ENCODE measurements at regions of chr1 and their contacts with region 1.

Region 1: DNA sequence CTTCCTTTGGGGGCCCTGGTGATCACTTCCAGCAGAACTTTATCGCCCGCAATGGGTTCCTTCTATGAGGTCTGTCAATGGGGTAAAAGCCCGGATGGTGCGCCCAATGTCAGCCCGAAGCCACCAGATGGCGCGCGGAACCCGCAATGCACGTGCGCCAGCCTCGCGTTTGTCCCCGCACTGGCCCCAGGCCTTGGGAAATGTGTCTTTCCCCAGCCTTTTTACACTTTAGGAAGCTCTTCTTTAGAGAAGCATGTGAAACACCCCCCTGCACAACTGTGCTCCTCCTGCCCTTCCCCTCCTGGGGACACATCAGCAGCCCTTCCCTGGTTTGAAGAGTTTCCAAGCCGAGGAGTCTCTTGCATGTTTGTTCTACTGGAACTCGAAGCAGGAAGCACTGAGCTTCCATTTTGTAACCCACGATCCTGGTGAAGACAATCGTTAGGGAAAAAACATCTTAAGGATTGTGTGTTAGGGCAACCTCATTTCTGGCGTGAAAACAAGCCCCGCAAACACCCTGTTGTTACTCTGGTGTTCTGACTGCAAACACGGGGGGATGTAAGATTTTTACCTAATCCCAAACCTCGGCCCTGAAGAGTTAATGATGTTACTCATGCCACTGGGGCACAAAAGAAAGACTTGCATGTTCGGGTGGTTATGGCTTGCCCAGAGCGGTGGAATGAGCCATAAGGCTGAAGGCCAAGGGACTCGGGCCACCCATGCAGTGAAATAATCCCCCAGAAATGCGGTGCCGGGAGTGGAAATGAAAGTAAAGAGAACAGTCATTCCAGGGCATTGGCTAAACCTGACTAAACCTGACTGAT is 20.4 kb upstream of the TARBP1 start:
- DNase-seq: peak; percentile 92 to 93
- ATAC-seq: peak; percentile 95 to 98 (median 97)
- H3K4me3 ChIP-seq: peak overlapping the region in 6 of 10 donors; percentile 3 to 21 (median 12)
- H3K27ac ChIP-seq: peak overlapping the region; percentile 61 to 88 (median 84)
- H3K4me1 ChIP-seq: peaks cover 4 to 48% (median 30%) of the 10 kb centered on the region in 9 donors
- H3K27me3 ChIP-seq: no peaks in the 10 kb centered on the region
- CTCF ChIP-seq: peak; percentile 92 to 99 (median 96)

Region 2: DNA sequence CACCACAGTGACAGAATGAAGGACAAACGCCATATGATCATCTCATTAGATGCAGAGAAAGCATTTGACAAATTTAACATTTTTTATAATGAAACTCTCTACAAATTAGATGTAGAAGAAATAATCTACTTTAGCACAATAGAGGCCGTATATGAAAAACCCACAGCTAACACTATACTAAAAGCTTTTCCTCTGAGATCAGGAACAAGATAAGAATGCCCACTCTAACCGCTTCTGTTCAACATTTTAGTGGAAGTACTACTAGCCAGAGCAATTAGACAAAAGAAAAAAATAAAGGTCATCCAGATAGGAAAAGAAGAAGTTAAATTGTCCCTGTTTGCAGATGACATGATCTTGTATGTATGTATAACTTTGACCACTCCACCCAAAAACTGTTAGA is 485.1 kb before region 1 on chr1:
- intact Hi-C with region 1: no loop called
- DNase-seq: no peak
- ATAC-seq: no peak
- H3K4me3 ChIP-seq: no peak overlapping the region
- H3K27ac ChIP-seq: no peak overlapping the region
- H3K4me1 ChIP-seq: no peaks in the 10 kb centered on the region
- H3K27me3 ChIP-seq: peaks cover 0 to 7% (median 0%) of the 10 kb centered on the region in 7 donors
- CTCF ChIP-seq: no peak

Region 3: DNA sequence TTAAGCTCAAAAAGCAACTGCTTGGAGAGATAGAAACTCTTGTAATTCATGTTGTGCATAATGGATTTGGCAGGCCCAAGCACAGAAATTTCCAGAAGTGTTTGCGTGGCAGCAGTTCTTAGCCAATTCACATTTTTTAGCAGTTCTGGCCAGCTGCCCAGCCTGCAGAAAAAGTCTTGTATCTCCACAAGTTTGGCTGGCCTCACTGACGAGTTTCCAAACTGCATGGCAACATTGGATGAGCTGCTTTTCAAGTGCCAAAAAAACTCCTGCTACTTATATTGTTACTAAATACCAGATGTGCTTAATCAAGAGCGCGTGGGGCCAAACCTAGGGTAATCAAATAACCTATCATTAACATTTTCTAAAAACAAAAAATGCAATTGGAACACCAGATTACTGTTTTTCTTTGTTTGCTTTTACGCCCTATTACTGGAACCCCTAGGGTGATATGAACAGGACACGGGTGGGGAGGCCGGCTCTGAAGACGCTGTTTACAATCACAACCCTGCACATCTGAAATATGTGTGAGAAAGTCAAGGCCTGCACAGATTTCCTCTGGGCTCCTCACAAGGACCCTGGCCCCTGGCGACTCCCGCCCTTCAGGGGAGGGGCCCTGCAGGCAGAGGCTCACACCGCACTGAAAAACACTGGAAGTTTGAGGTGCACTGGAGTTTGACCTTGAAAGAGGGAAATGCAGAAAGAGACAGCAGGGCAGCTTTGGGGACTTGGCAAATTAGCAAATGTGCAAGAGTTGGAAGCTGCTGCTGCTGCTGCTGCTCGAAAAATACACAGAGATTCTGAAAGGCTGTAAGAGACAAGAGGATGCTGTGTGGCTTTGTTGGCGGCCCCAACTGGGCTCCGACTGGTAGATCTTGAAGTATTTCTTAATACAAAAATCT is 34.9 kb after region 1 on chr1:
- intact Hi-C with region 1: loop called in 2 of 10 experiments (anchors 5 kb)
- DNase-seq: peak; percentile 89 to 95
- ATAC-seq: peak in 7 of 8 donors; percentile 6 to 60 (median 30)
- H3K4me3 ChIP-seq: peak overlapping the region in 1 of 10 donors; percentile 1
- H3K27ac ChIP-seq: peak overlapping the region; percentile 94 to 99 (median 98)
- H3K4me1 ChIP-seq: peaks cover 53 to 100% (median 97%) of the 10 kb centered on the region in 9 donors
- H3K27me3 ChIP-seq: no peaks in the 10 kb centered on the region
- CTCF ChIP-seq: no peak

Region 4: GRCh38 chr1:234599617-234600417 is 100.5 kb after region 1 on chr1:
- intact Hi-C with region 1: loop called in 7 of 10 experiments (anchors 2 to 10 kb)
- DNase-seq: peak; percentile 89 to 91
- ATAC-seq: peak; percentile 82 to 97 (median 91)
- H3K4me3 ChIP-seq: peak overlapping the region in 9 of 10 donors; percentile 29 to 95 (median 51)
- H3K27ac ChIP-seq: peak overlapping the region; percentile 91 to 100 (median 99)
- H3K4me1 ChIP-seq: peaks cover 3 to 70% (median 54%) of the 10 kb centered on the region in 9 donors
- H3K27me3 ChIP-seq: no peaks in the 10 kb centered on the region
- CTCF ChIP-seq: peak in 3 of 9 donors; percentile 22 to 36 (median 25)

Region 5: DNA sequence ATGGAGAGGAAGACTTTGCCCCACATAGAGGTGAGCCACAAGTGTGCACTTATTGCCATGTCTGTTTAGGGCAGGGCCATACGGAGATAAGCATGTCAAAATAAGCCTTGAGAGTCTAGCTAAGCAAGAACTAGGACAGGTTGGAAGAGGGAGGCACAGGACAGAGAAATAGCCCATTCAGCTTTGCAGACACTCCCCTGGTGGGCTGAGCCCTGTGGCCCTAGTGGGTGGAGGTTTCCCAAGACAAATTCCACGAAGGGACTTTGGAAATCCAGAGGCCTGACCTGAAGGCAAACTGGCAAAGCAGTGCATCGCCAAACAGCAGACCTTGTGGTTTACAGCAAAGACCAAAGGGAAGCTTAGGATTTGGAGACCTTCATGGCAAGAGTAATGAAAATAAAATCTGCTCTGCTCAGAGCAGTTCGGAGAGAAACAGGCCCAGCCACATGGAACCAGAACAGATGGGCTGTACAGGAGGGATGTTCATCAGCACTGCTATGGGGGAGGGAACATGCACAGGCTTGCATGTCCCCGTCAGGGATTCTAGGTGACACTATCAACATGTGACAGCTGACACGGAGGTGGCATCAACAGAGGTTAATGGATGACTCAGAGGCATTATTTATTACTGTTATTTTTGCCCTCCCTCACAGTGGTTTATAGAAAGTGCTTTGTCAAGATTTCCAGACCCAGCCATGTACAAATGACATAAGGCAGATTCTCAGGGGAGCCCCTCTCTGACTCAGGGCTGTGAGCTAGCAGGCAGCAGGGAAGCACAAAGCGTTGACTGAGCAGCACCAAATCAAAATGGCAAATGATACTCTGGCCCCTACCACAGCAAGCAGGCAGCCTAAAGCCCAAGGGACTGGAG is 200.7 kb after region 1 on chr1:
- intact Hi-C with region 1: loop called in 1 of 10 experiments (anchors 10 kb)
- DNase-seq: peak in 1 of 2 donors; percentile 62
- ATAC-seq: peak in 7 of 8 donors; percentile 13 to 69 (median 48)
- H3K4me3 ChIP-seq: no peak overlapping the region
- H3K27ac ChIP-seq: peak overlapping the region in 9 of 10 donors; percentile 21 to 67 (median 57)
- H3K4me1 ChIP-seq: peaks cover 0 to 40% (median 14%) of the 10 kb centered on the region in 9 donors
- H3K27me3 ChIP-seq: no peaks in the 10 kb centered on the region
- CTCF ChIP-seq: no peak

Region 6: GRCh38 chr1:234862944-234863515 is 363.7 kb after region 1 on chr1:
- intact Hi-C with region 1: loop called in 1 of 10 experiments (anchors 10 kb)
- DNase-seq: peak; percentile 76 to 86
- ATAC-seq: peak; percentile 62 to 85 (median 76)
- H3K4me3 ChIP-seq: peak overlapping the region in 4 of 10 donors; percentile 4 to 17 (median 6)
- H3K27ac ChIP-seq: peak overlapping the region; percentile 60 to 93 (median 82)
- H3K4me1 ChIP-seq: peaks cover 6 to 51% (median 42%) of the 10 kb centered on the region in 9 donors
- H3K27me3 ChIP-seq: no peaks in the 10 kb centered on the region
- CTCF ChIP-seq: no peak

Region 7: DNA sequence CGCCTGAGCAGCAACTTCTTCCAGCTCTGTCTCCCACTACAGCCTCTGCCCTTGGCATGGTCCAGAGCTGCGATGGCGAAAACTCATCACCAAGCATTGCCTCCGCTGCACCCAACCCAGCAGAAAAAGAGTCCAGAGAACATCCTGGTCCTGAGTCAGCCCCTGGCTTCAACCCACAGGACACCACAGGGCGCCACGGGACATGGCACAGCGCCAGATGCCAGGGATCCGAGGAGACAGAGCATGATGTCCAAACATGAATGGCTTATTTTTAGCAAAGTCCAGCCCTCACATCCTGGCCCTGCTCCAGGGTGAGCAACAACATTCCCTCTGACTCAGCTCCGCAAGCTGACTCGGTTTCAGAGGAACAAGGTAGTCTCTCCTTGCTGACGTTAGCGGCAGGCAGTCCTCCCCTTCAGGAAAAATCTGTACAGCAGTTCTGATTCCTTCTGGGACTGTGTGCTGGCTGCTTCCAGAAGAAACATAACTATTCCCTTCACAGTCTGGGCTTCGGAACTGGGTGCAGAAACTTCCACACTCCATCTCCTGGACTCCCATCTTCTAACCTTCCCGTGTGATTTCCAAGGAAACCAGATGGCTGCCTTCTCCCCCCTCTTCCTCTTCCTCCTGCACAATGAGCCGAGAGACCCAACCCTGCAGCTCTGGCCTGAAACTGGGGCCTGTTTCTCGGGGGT is 498.0 kb after region 1 on chr1:
- intact Hi-C with region 1: loop called in 1 of 10 experiments (anchors 10 kb)
- DNase-seq: peak; percentile 97
- ATAC-seq: peak; percentile 91 to 98 (median 96)
- H3K4me3 ChIP-seq: peak overlapping the region in 5 of 10 donors; percentile 6 to 13 (median 12)
- H3K27ac ChIP-seq: peak overlapping the region; percentile 87 to 95 (median 92)
- H3K4me1 ChIP-seq: peaks cover 21 to 35% (median 30%) of the 10 kb centered on the region in 9 donors
- H3K27me3 ChIP-seq: no peaks in the 10 kb centered on the region
- CTCF ChIP-seq: no peak

Region 8: GRCh38 chr1:235093696-235094592 is 594.6 kb after region 1 on chr1:
- intact Hi-C with region 1: loop called in 4 of 10 experiments (anchors 2 to 5 kb)
- DNase-seq: peak; percentile 73 to 80
- ATAC-seq: peak; percentile 62 to 88 (median 80)
- H3K4me3 ChIP-seq: peak overlapping the region in 9 of 10 donors; percentile 11 to 50 (median 33)
- H3K27ac ChIP-seq: peak overlapping the region in 5 of 10 donors; percentile 24 to 67 (median 36)
- H3K4me1 ChIP-seq: peaks cover 3 to 15% (median 12%) of the 10 kb centered on the region in 9 donors
- H3K27me3 ChIP-seq: no peaks in the 10 kb centered on the region
- CTCF ChIP-seq: peak; percentile 86 to 94 (median 89)

Measured in heart right ventricle (tissue), 16 donors.